AG04450 (cell line): ENCODE measurements at regions of chrX and their contacts with region 1.

Region 1: GRCh38 chrX:110146521-110146920 is 143.6 kb downstream of the TMEM164 start:
- DNase-seq: no peak
- H3K4me3 ChIP-seq: no peak overlapping the region
- H3K27ac ChIP-seq: no peak overlapping the region
- H3K27me3 ChIP-seq: no peaks in the 10 kb centered on the region
- CTCF ChIP-seq: peak; percentile 71

Region 2: GRCh38 chrX:109911046-109911445 is 235.5 kb before region 1 on chrX:
- CTCF ChIA-PET with region 1: interaction called, 96 read pairs
- POLR2A ChIA-PET with region 1: no interaction called
- DNase-seq: no peak
- H3K4me3 ChIP-seq: no peak overlapping the region
- H3K27ac ChIP-seq: no peak overlapping the region
- H3K27me3 ChIP-seq: peaks cover 1% of the 10 kb centered on the region
- CTCF ChIP-seq: peak; percentile 58

Region 3: DNA sequence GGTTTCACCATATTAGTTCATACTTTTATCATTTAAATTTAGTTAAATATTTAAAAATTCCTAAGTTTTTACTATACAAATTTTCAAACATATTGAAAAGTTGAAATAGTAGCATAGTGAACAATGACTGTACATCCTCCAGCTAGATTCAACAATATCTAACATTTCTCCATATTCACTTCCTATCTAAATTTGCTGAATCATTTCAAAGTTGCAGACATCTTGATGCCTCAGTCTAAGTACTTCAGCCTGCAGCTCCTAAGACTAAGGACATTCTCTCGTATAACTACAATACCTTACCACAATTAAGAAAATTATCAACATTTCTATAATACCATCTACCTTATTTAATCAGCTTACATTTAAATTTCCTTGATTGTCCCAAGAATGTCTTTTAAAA is 10.9 kb before region 1 on chrX:
- CTCF ChIA-PET with region 1: interaction called, 21 read pairs
- POLR2A ChIA-PET with region 1: no interaction called
- DNase-seq: no peak
- H3K4me3 ChIP-seq: no peak overlapping the region
- H3K27ac ChIP-seq: no peak overlapping the region
- H3K27me3 ChIP-seq: no peaks in the 10 kb centered on the region
- CTCF ChIP-seq: no peak

Region 4: GRCh38 chrX:110412971-110413721 is 266.6 kb after region 1 on chrX:
- CTCF ChIA-PET with region 1: interaction called, 464 read pairs
- POLR2A ChIA-PET with region 1: no interaction called
- DNase-seq: no peak
- H3K4me3 ChIP-seq: no peak overlapping the region
- H3K27ac ChIP-seq: no peak overlapping the region
- H3K27me3 ChIP-seq: no peaks in the 10 kb centered on the region
- CTCF ChIP-seq: peak; percentile 80

Region 5: DNA sequence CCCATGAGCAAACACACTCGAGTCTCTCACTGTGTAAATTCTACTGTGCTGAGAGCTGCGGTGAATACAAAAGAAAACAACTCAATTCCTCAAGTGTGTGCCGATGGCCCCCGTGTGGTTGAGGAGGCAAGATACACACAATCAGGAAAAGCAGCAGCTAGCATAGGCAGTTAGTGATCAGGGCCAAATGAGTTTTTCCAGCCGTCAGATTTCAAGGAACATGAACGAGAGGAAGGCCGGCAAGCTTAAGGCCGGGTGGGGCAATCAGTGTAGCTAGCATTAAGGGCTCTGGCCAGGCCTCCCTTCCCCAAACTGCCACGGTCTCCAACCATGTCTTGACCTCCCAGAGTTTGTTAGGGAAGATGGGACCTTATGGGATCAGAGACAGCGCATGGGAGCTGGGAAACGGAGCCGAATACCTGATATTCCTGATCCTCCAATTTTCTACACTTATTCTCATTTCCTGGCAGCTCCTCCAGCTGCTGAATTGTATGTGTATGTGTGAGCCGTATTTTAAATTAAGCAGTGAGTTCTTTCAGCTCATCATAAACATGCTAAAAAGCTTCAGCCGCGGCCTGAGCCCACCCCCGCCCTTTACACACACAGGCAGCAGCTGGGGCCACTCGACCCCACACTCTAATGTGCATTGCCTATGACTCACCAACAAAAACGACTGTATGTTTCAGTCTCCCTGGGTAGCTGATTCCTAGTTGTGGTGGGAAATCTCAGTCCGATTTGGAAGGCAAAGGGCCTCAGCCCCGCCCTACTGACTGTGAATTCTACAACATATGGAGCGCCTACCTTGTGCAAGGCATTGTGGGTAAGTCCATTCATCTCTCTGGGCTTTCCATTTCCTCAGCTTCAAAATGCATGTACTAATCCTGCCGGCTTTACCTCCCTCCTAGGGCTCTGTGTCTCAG is 272.1 kb after region 1 on chrX:
- CTCF ChIA-PET with region 1: interaction called, 464 read pairs
- POLR2A ChIA-PET with region 1: interaction called, 3 read pairs
- DNase-seq: peak; percentile 66
- H3K4me3 ChIP-seq: peak overlapping the region; percentile 24
- H3K27ac ChIP-seq: peak overlapping the region; percentile 74
- H3K27me3 ChIP-seq: no peaks in the 10 kb centered on the region
- CTCF ChIP-seq: peak; percentile 66

Region 6: DNA sequence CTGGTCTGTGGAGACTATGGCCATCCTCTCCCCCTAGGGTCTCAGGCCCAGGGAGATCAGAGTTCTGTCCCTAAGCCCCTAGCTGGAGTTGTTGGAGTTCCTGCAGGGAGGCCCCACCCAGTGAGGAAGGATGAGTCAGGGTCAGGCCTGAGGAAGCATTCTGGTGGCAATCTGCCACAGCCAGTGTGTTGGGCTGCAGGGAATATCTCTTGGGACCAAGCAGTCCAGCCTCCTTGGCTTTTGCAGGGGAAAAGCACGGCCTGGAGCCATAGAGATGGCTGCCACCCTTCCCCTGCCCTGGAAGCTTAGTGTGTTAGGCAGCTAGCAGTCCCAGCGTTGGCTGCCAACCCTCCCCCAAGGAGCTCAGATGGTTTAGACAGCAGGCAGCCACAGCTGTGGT is 414.5 kb after region 1 on chrX:
- CTCF ChIA-PET with region 1: no interaction called
- POLR2A ChIA-PET with region 1: no interaction called
- DNase-seq: no peak
- H3K4me3 ChIP-seq: no peak overlapping the region
- H3K27ac ChIP-seq: no peak overlapping the region
- H3K27me3 ChIP-seq: no peaks in the 10 kb centered on the region
- CTCF ChIP-seq: no peak